Activated CD4-positive, alpha-beta memory T cell treated with anti-CD3 and anti-CD28 coated beads for 36 hours (primary cell): ENCODE measurements at regions of chr6 and their contacts with region 1.

Region 1: DNA sequence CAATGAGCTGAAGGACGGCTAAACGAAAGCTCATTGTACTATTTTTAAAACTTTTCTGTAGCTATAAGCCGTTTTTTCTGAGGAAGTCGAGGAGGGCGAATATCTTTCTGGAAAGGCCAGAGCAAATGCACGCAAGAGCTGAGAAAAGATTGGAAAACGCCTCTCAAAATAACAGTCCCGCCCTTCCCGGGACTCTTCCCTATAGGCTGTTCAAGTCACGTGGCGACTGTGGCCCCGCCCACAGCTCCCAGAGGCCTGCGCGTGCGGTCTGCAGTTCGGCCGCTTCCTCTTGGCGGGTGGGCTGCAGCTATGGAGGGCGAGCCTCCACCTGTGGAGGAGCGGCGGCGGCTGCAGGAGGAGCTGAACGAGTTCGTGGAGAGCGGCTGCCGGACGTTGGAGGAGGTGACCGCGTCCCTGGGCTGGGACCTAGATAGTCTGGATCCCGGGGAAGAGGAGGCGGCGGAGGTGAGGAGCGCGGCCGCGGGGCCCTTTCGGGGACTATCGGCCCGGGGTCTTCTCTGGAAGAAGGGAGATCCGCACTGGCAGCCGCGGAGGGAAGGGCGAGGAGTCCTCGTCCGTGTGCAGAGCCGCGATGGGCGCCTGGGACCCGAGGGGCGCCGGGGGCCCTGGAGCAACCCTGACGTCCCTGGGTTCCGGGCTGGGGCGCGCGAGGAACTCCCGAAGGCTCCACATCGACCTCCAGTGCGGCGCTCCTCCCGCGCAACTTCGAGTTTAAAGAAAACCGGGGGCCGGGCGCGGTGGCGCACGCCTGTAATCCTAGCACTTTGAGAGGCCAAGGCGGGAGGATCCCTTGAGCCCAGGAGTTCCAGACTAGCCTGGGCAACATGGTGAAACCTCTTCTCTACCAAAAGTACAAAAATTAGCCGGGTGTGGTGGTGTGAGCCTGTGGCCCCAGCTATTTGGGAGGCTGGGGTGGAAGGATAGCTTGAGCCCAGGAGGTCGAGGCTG is at the start of gene SNRNP48:
- DNase-seq: peak; percentile 95
- H3K4me3 Mint-ChIP-seq: peak within 1 kb of the TSS; percentile 99
- H3K27ac Mint-ChIP-seq: peak within 1 kb of the TSS; percentile 94
- H3K4me1 Mint-ChIP-seq: peaks cover 40% of the 10 kb centered on the region
- H3K27me3 Mint-ChIP-seq: no peaks in the 10 kb centered on the region
- total RNA-seq, gene SNRNP48: 21.1 to 21.8 TPM

Region 2: DNA sequence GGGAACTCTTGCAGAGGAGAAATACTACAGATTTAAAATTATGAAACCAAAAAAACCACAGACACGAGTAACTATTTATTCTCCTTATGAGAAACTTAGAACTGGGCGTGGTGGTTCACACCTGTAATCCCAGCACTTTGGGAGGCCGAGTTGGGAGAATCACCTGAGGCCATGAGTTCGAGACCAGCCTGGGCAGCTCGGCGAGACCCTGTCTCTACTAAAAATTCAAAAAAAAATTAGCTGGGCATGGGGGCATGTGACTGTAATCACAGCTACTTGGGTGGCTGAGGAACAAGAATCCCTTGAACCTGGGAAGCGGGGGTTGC is 314.1 kb before region 1 on chr6:
- CTCF ChIA-PET with region 1: interaction called, 11 read pairs
- POLR2A ChIA-PET with region 1: interaction called, 4 read pairs
- intact Hi-C with region 1: no loop called
- DNase-seq: no peak
- H3K4me3 Mint-ChIP-seq: no peak overlapping the region
- H3K27ac Mint-ChIP-seq: no peak overlapping the region
- H3K4me1 Mint-ChIP-seq: peaks cover 9% of the 10 kb centered on the region
- H3K27me3 Mint-ChIP-seq: peaks cover 2% of the 10 kb centered on the region

Region 3: DNA sequence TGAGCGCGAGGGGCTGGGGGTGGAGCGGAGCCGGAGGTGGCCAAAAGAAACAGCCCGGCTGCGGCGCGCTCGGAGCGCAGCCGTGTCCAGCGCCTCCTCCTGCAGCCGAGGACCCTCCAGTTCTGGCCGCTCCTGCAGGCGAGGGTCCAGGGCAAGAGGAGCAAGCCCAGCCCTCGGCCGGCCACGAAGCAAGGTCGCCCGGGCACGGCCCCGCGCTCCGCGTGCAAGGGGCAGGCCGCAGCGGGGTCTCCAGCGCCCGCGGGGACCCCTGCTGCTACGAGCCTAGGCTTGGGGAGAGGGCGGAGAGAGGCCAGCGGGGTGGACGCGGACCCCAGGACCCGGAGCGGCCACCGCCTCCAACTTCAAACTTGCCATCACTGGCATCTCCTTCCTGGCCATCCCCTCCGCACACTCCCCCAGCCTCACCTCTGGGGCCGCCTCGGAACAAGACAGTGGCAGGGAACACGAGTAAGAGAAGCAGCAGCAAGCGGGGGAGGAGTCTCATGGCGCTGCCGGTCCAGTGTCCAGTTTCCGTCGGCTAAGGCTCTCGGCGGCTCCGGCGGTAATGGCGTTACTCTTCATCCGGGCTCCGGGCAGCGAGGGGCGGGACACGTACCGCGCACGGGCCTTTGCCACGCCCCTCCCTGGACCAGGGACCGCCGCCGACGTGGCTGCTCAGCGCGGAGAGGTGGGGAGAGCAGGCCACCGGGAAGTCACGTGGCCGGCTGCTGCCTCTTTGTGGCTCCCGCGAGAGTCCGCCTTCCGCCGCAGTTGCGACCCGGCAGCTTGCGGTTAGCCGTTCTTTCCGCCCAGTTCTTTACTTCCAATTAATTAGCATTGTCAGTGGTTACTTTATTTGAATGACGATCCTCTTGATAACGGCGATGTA is 277.4 kb before region 1 on chr6 and contains the start of gene SSR1:
- CTCF ChIA-PET with region 1: no interaction called
- POLR2A ChIA-PET with region 1: no interaction called
- intact Hi-C with region 1: loop called (anchors 5 kb)
- DNase-seq: peak; percentile 97
- H3K4me3 Mint-ChIP-seq: peak within 1 kb of the TSS; percentile 92
- H3K27ac Mint-ChIP-seq: peak within 1 kb of the TSS; percentile 95
- H3K4me1 Mint-ChIP-seq: peaks cover 40% of the 10 kb centered on the region
- H3K27me3 Mint-ChIP-seq: no peaks in the 10 kb centered on the region
- total RNA-seq, gene SSR1: 156 to 164 TPM

Region 4: GRCh38 chr6:7604506-7604905 is 14.3 kb after region 1 on chr6:
- CTCF ChIA-PET with region 1: no interaction called
- POLR2A ChIA-PET with region 1: interaction called, 4 read pairs
- intact Hi-C with region 1: loop called (anchors 2 kb)
- DNase-seq: no peak
- H3K4me3 Mint-ChIP-seq: no peak overlapping the region
- H3K27ac Mint-ChIP-seq: peak overlapping the region; percentile 34
- H3K4me1 Mint-ChIP-seq: peaks cover 18% of the 10 kb centered on the region
- H3K27me3 Mint-ChIP-seq: no peaks in the 10 kb centered on the region

Region 5: DNA sequence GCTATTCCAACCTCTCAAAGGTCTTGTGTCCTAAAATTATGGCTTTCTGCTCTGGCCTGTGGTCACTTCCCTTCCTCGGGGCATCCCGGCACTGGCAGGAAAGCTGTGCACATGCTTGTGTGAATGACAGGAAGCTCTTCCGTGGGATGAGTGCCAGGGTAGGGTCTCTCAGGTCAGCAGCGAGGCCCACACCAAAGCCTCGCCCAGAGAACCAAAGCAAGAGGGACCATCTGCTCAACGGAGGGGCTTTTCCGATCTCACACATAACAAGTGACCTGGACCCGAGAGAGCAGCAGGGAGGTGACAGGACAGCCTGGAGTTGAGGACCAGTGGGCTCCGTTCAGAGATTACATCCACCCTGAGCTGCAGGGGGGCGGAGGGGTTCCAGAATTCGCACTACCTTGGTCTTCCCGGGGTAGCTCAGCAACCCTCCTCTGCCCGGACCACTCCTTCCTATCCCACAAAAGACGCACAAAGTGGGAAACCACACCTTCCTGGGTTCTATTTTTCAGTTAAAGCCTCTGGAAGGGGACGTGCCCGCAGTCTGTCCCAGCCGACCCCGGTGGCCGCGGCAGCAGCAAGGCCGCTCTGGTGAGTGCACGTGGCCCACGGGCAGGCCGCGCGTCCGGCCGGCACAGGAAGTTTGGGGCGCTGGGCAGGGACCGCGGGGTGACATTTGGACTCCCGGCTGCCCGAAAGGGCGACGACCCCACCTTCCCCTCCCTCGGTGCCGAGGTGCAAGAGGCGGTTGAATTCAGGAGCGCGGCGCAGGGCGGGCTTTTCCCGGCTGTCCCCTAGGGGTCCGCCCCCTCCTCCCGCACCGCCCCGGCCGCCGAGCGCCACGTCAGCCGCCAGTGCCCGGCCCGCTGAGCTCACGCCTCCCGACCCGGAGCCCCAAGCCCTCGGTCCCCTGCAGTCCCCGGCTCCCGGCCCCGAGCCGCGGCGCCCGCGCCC is 319.4 kb after region 1 on chr6:
- CTCF ChIA-PET with region 1: no interaction called
- POLR2A ChIA-PET with region 1: no interaction called
- intact Hi-C with region 1: no loop called
- DNase-seq: peak; percentile 66
- H3K4me3 Mint-ChIP-seq: peak overlapping the region; percentile 77
- H3K27ac Mint-ChIP-seq: no peak overlapping the region
- H3K4me1 Mint-ChIP-seq: peaks cover 18% of the 10 kb centered on the region
- H3K27me3 Mint-ChIP-seq: no peaks in the 10 kb centered on the region

Region 6: DNA sequence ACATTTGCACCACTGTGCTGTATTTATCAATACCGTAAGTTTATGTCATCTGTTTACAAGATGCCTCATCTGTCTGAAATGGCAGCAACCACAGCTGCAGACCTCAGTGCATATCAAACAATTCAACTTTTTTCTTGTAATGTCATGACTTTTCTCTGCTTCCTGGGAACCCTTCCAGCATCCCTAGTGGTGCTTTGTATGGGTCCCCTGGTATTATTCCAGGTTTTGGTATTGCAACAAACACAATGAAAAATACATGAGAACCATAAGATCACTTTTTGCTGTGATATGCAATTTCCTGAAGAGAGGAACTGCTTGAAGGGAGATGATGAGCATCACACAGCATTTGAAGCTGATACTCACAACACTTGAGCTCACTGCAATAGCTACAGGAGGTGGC is 332.4 kb after region 1 on chr6:
- CTCF ChIA-PET with region 1: no interaction called
- POLR2A ChIA-PET with region 1: no interaction called
- intact Hi-C with region 1: no loop called
- DNase-seq: no peak
- H3K4me3 Mint-ChIP-seq: no peak overlapping the region
- H3K27ac Mint-ChIP-seq: no peak overlapping the region
- H3K4me1 Mint-ChIP-seq: no peaks in the 10 kb centered on the region
- H3K27me3 Mint-ChIP-seq: peaks cover 7% of the 10 kb centered on the region

Region 7: GRCh38 chr6:8102122-8102958 is 512.1 kb after region 1 on chr6 and contains the start of gene EEF1E1:
- CTCF ChIA-PET with region 1: no interaction called
- POLR2A ChIA-PET with region 1: no interaction called
- intact Hi-C with region 1: loop called (anchors 1 kb)
- DNase-seq: peak; percentile 99
- H3K4me3 Mint-ChIP-seq: peak within 1 kb of the TSS; percentile 87
- H3K27ac Mint-ChIP-seq: peak within 1 kb of the TSS; percentile 81
- H3K4me1 Mint-ChIP-seq: peaks cover 32% of the 10 kb centered on the region
- H3K27me3 Mint-ChIP-seq: peaks cover 14% of the 10 kb centered on the region
- total RNA-seq, gene EEF1E1: 60.9 to 62.5 TPM

Region 8: GRCh38 chr6:8435160-8435852 is 845.1 kb after region 1 on chr6 and contains the start of gene SLC35B3:
- CTCF ChIA-PET with region 1: no interaction called
- POLR2A ChIA-PET with region 1: no interaction called
- intact Hi-C with region 1: loop called (anchors 10 kb)
- DNase-seq: peak; percentile 98
- H3K4me3 Mint-ChIP-seq: peak within 1 kb of the TSS; percentile 93
- H3K27ac Mint-ChIP-seq: peak within 1 kb of the TSS; percentile 96
- H3K4me1 Mint-ChIP-seq: peaks cover 28% of the 10 kb centered on the region
- H3K27me3 Mint-ChIP-seq: no peaks in the 10 kb centered on the region
- total RNA-seq, gene SLC35B3: 7.6 to 7.9 TPM